ENCODE measurements at regions of chr6 and their contacts with region 1.

Region 1: DNA sequence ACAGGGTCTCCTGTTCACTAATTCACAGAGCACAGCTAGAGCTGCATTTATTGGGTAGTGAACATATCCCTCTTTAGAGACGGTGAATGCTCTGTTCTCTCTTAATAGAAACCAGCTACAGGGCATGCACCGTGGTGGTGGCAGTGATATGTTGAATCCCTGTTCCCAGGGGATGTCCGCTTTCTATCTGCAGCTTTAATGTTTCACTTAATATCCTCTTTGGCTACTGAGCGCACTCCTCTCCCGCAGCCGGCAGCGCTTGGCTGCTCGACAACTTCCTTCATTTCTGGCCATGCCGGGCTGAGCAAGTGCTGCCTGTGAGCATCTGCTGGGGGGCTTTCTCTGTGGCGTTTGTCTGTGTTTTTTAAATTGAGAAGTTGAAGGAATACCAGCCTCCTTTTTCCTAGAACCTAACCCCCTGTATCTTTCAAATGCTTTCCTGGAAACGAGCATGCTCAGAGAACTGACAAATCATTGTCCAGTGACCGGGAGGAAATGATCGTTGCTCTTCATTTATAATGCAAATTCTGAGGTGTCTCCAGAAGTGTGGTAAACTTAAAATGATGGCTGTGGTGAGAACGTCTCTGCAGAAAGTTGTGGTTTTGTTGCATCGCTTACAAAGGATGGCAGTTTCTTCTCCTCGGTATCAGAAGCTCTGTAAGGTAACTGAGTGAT is 297.9 kb downstream of the UTRN start:
- DNase-seq: peak; percentile 83
- ATAC-seq: peak; percentile 90
- H3K4me3 ChIP-seq: peak overlapping the region; percentile 16; the same call in 1 of the 2 replicates
- H3K27ac ChIP-seq: no peak overlapping the region
- H3K4me1 ChIP-seq: peaks cover 21% of the 10 kb centered on the region; the same call in 1 of the 2 replicates
- H3K27me3 ChIP-seq: no peaks in the 10 kb centered on the region
- CTCF ChIP-seq: no peak
- EP300 ChIP-seq: peak in 1 of 2 experiments; percentile 63; a peak in 1 of 4 replicates
- POLR2A ChIP-seq: no peak
- RAD21 ChIP-seq: no peak

Region 2: DNA sequence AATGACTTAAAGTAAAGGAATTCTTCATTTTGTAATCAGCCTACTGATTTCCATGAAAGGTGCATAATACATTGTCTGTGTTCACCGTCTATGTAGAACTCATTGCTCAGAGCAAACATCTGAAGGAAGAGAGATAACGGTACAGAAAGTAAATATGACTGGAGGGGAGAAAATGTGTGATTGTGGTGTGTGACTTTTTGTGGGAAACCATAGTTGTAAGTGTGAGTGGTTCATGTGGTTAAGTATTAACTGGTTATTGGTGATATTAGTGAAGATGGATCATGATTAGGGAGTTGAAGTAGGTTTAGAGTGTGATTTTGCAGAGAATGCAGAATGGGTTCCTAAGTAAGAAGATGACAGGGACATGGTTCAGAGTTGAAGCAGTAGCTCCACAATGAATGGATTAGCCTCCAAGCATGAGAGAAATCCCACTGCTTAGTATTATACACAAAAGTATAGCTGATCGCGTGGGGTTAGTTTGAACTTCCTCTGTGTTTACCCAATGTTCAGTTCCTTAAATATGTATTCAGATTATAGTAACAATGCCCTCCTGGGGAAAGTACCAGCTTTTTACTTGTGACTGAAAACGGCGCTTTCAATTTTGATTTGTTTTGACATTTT is 70.9 kb after region 1 on chr6:
- CTCF ChIA-PET with region 1: interaction called, 3 read pairs
- POLR2A ChIA-PET with region 1: no interaction called
- RAD21 ChIA-PET with region 1: interaction called, 6 read pairs
- SMC1A ChIA-PET with region 1: interaction called, 4 read pairs
- in situ Hi-C with region 1: no loop called
- intact Hi-C with region 1: loop called (anchors 5 kb)
- DNase-seq: peak; percentile 45
- ATAC-seq: peak; percentile 97
- H3K4me3 ChIP-seq: peak overlapping the region; percentile 19; the same call in 1 of the 2 replicates
- H3K27ac ChIP-seq: peak overlapping the region; percentile 50
- H3K4me1 ChIP-seq: peaks cover 8% of the 10 kb centered on the region
- H3K27me3 ChIP-seq: no peaks in the 10 kb centered on the region
- CTCF ChIP-seq: no peak
- EP300 ChIP-seq: peak; percentile 50 to 53; a peak in 1 of 4 replicates
- POLR2A ChIP-seq: no peak
- RAD21 ChIP-seq: no peak

Region 3: GRCh38 chr6:144778773-144779492 is 195.9 kb after region 1 on chr6:
- CTCF ChIA-PET with region 1: interaction called, 93 read pairs
- POLR2A ChIA-PET with region 1: no interaction called
- RAD21 ChIA-PET with region 1: interaction called, 61 read pairs
- SMC1A ChIA-PET with region 1: interaction called, 51 read pairs
- in situ Hi-C with region 1: no loop called
- intact Hi-C with region 1: loop called (anchors 1 kb)
- DNase-seq: no peak
- ATAC-seq: peak; percentile 71
- H3K4me3 ChIP-seq: no peak overlapping the region
- H3K27ac ChIP-seq: no peak overlapping the region
- H3K4me1 ChIP-seq: no peaks in the 10 kb centered on the region
- H3K27me3 ChIP-seq: no peaks in the 10 kb centered on the region
- CTCF ChIP-seq: peak; percentile 23 to 36 (median 30); a peak in 3 of 6 replicates
- EP300 ChIP-seq: no peak
- POLR2A ChIP-seq: no peak
- RAD21 ChIP-seq: 0 out of 2 replicates have a peak, but pooled peaks have one; percentile 40

Region 4: GRCh38 chr6:144939921-144940320 is 356.8 kb after region 1 on chr6:
- CTCF ChIA-PET with region 1: no interaction called
- POLR2A ChIA-PET with region 1: no interaction called
- RAD21 ChIA-PET with region 1: no interaction called
- SMC1A ChIA-PET with region 1: interaction called, 3 read pairs
- in situ Hi-C with region 1: loop called (anchors 5 kb)
- intact Hi-C with region 1: no loop called
- DNase-seq: no peak
- ATAC-seq: no peak
- H3K4me3 ChIP-seq: no peak overlapping the region
- H3K27ac ChIP-seq: no peak overlapping the region
- H3K4me1 ChIP-seq: no peaks in the 10 kb centered on the region
- H3K27me3 ChIP-seq: peaks cover 0 to 4% of the 10 kb centered on the region in 2 experiments; a peak in 2 of 4 replicates
- CTCF ChIP-seq: no peak
- EP300 ChIP-seq: no peak
- POLR2A ChIP-seq: no peak
- RAD21 ChIP-seq: no peak

Region 5: DNA sequence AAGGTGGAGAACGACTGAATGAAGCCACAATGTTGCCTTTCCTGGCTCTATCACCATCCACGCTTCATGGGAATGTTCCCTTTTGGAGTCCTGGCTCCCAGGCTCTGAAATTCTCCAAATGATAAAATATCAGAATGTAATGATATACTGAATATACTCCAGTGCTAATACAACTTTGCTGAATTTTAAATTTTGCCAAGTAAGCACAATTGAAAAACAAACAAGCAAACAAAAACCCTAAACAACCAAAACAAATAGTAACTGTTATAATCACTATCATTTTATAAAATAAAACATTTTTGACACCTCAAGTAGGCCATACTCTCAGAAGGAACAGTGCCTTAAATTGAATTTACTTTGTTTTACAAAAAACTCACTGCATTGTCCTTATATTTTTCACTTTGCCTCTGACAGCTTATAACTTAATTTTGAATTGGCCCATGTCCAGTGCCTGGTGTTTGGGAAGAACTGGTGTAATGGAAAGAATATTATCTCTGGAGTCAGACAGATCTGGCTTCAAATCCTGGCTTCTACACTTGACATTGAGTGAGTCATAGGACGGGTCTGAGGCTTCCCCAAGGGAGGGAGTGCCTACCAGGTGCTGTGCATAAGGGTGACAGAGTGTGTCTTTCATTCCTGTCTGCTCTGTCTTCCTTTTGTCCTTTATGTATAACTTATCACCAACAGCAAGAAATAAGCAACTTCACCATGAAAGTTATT is 453.9 kb after region 1 on chr6:
- CTCF ChIA-PET with region 1: interaction called, 4 read pairs
- POLR2A ChIA-PET with region 1: no interaction called
- RAD21 ChIA-PET with region 1: no interaction called
- SMC1A ChIA-PET with region 1: no interaction called
- in situ Hi-C with region 1: loop called (anchors 10 kb)
- intact Hi-C with region 1: no loop called
- DNase-seq: no peak
- ATAC-seq: no peak
- H3K4me3 ChIP-seq: no peak overlapping the region
- H3K27ac ChIP-seq: no peak overlapping the region
- H3K4me1 ChIP-seq: no peaks in the 10 kb centered on the region
- H3K27me3 ChIP-seq: no peaks in the 10 kb centered on the region
- CTCF ChIP-seq: no peak
- EP300 ChIP-seq: no peak
- POLR2A ChIP-seq: no peak
- RAD21 ChIP-seq: no peak

Region 6: DNA sequence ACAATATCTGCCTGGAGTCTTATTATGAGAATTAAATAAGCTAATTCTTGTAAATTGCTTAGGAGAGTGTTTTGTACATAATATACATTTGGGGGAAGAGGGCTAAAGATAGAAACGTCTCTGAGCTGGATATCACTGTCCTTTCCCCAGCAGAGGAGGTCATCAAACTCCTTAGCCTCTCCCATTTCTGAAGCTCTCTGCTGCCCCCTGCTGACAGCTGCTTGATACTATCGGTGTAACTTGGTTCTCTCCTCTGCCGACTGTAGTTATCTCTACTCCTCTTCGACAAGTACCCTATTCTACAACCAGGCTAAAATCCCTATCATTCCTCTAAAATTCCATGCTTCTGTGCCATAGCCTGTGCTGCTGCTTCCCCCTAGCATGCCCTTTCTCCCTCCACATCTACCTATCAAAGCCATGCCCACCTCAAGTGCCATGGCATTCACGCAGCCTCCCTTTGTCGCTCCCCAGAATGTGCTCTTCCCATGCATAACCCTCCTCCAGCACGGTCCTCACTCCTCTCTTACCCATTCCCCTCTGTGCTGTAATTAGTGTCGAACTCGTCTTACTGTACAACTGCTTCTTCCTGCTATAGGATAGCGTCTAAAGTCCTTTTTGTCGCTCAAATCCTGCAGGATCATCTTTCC is 1051.0 kb after region 1 on chr6:
- CTCF ChIA-PET with region 1: interaction called, 15 read pairs
- POLR2A ChIA-PET with region 1: no interaction called
- RAD21 ChIA-PET with region 1: interaction called, 4 read pairs
- SMC1A ChIA-PET with region 1: interaction called, 4 read pairs
- in situ Hi-C with region 1: loop called (anchors 10 kb)
- intact Hi-C with region 1: loop called (anchors 2 kb)
- DNase-seq: peak; percentile 27
- ATAC-seq: peak; percentile 98
- H3K4me3 ChIP-seq: no peak overlapping the region
- H3K27ac ChIP-seq: no peak overlapping the region
- H3K4me1 ChIP-seq: no peaks in the 10 kb centered on the region
- H3K27me3 ChIP-seq: no peaks in the 10 kb centered on the region
- CTCF ChIP-seq: peak; percentile 82 to 87 (median 83)
- EP300 ChIP-seq: no peak
- POLR2A ChIP-seq: no peak
- RAD21 ChIP-seq: peak; percentile 89